ENCODE measurements at regions of chr5 and their contacts with region 1.

Region 1: GRCh38 chr5:72244862-72245371 is 75.1 kb downstream of the MRPS27 start:
- DNase-seq: peak in 1 of 2 donors; percentile 64
- H3K4me3 ChIP-seq: no peak overlapping the region
- H3K27ac ChIP-seq: peak overlapping the region; percentile 79 to 84
- H3K4me1 ChIP-seq: peaks cover 30 to 49% of the 10 kb centered on the region in 2 donors
- H3K27me3 ChIP-seq: no peaks in the 10 kb centered on the region
- CTCF ChIP-seq: peak; percentile 10 to 35 (median 24)

Region 2: DNA sequence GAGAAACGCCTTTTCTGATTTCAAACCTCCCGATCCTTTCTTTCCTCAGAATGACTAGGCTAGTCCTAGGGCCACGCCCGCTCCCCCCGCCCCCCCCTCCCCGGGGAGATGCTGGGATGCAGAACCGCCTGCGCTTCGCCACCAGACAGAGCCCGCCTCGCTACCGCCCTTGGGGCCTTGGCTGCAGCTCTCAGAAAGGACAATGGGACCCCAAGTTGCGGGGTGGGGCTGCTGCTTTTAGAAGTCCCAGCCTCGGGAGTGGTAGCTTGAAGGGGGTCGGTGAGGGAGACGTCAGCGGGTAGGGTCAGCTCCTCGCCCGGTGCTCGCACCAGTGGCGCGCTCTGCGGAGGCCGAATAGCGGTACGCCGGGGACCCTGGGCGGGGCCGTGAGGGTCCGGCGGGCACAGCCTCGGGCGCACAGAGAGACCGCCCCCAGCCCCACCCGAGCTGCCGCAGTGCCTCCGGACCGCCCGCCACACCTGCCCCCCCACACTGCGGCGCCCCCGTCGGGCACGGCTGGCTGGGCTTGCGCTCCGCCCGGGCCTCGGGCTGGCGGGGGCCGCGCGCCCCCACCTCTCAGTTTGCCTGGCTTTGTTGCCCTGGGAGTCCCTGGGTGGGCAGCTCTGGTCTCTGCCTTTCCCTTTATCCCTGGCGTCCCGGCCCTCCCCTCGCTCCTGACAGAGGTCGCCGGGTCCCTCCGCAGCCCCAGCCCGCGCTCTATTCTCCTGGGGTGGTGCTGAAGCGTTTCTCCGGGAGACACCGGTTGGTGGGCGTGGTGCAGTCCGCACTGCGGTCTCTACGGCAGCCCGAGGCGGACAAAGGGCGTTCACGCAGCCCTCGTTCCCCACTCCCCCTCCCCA is 136.5 kb before region 1 on chr5:
- intact Hi-C with region 1: loop called (anchors 5 kb)
- DNase-seq: peak; percentile 56 to 93
- H3K4me3 ChIP-seq: peak overlapping the region; percentile 72 to 94
- H3K27ac ChIP-seq: peak overlapping the region; percentile 94 to 97
- H3K4me1 ChIP-seq: peaks cover 0 to 14% of the 10 kb centered on the region in 2 donors
- H3K27me3 ChIP-seq: no peaks in the 10 kb centered on the region
- CTCF ChIP-seq: no peak

Region 3: GRCh38 chr5:72138943-72139521 is 105.9 kb before region 1 on chr5:
- intact Hi-C with region 1: loop called (anchors 5 kb)
- DNase-seq: no peak
- H3K4me3 ChIP-seq: peak overlapping the region; percentile 35 to 43
- H3K27ac ChIP-seq: peak overlapping the region; percentile 93 to 95
- H3K4me1 ChIP-seq: peaks cover 26 to 89% of the 10 kb centered on the region in 2 donors
- H3K27me3 ChIP-seq: no peaks in the 10 kb centered on the region
- CTCF ChIP-seq: no peak

Region 4: DNA sequence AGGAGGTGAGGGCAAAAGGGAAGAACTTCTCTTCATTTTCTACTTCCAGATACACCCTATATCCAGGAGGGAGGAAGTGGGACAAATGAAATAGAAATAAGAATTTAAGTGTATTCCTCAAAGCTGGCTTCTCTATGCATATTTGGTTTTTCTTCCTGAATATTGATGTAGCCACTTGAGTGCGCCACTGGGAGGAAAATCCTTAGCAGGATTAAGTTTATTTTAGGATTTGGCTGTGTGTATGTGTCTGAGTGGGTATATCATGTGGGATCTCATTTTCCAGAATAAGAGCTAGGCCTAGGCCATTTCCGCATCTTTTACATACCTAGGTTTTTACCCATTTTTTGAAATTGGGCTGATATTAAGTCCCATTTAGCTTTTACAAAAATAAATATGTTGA is 95.2 kb before region 1 on chr5:
- intact Hi-C with region 1: loop called (anchors 5 kb)
- DNase-seq: no peak
- H3K4me3 ChIP-seq: peak overlapping the region in 1 of 2 donors; percentile 6
- H3K27ac ChIP-seq: peak overlapping the region; percentile 93 to 95
- H3K4me1 ChIP-seq: peaks cover 39 to 91% of the 10 kb centered on the region in 2 donors
- H3K27me3 ChIP-seq: no peaks in the 10 kb centered on the region
- CTCF ChIP-seq: peak in 2 of 3 experiments; percentile 31 to 47

Region 5: GRCh38 chr5:72265032-72265903 is 20.4 kb after region 1 on chr5:
- intact Hi-C with region 1: loop called (anchors 2 kb)
- DNase-seq: no peak
- H3K4me3 ChIP-seq: peak overlapping the region in 1 of 2 donors; percentile 2
- H3K27ac ChIP-seq: peak overlapping the region; percentile 65 to 75
- H3K4me1 ChIP-seq: peaks cover 5 to 17% of the 10 kb centered on the region in 2 donors
- H3K27me3 ChIP-seq: no peaks in the 10 kb centered on the region
- CTCF ChIP-seq: no peak

Region 6: GRCh38 chr5:73311291-73312110 is 1066.6 kb after region 1 on chr5:
- intact Hi-C with region 1: no loop called
- DNase-seq: peak; percentile 19 to 86
- H3K4me3 ChIP-seq: peak overlapping the region in 1 of 2 donors; percentile 40
- H3K27ac ChIP-seq: peak overlapping the region; percentile 55 to 65
- H3K4me1 ChIP-seq: peaks cover 0 to 12% of the 10 kb centered on the region in 2 donors
- H3K27me3 ChIP-seq: no peaks in the 10 kb centered on the region
- CTCF ChIP-seq: no peak